AG04450 (cell line): ENCODE measurements at regions of chr5 and their contacts with region 1.

Region 1: GRCh38 chr5:150789943-150790611 is 11.5 kb downstream of the SMIM3 start:
- DNase-seq: peak; percentile 95
- H3K4me3 ChIP-seq: peak overlapping the region; percentile 4
- H3K27ac ChIP-seq: peak overlapping the region; percentile 73
- H3K27me3 ChIP-seq: no peaks in the 10 kb centered on the region
- CTCF ChIP-seq: no peak

Region 2: DNA sequence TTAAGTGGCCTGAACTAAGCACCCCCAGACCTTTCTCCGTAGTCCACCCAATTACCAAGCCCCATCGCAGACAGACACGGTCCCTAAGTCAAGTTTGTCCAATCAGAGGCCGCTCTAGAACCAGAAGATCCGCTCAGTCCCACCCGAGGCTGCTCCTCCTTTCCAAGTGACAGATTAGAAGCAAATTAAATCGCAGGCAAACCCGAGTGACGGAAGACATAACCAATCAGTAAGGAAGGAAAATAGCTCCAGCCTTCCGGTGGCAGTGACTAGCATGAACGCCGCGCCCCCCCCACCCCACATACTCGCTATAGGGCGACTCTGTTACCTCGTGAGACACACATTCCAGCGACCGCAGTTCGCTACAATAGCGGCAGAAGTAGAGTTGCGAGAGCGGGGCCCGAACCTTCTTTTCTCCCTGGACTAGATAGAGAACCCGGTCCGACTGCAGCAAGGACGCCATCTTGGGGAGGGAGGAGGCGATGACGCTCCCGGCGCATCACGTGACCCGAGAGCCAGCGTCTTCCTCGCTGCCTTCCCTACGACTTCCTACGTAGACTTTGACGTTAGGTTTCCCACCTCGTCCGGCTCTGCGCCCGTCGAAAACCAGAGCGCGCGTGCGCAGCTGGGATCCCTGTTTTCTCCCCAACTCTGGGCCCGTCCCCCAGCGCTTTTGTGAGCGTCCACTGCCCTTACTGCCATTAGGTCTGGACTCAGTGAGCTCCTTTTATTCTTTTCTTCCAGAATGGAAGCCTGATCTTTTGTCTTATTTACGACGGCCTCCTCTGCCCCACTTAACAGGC is 31.3 kb before region 1 on chr5 and contains the start of gene DCTN4:
- CTCF ChIA-PET with region 1: interaction called, 3 read pairs
- POLR2A ChIA-PET with region 1: interaction called, 10 read pairs
- DNase-seq: peak; percentile 98
- H3K4me3 ChIP-seq: peak within 1 kb of the TSS; percentile 88
- H3K27ac ChIP-seq: peak within 1 kb of the TSS; percentile 97
- H3K27me3 ChIP-seq: no peaks in the 10 kb centered on the region
- CTCF ChIP-seq: no peak
- polyA plus RNA-seq, gene DCTN4: 54.6 and 61.1 TPM in 2 replicates

Region 3: GRCh38 chr5:150778517-150779396 is 11.3 kb before region 1 on chr5 and contains the start of gene SMIM3:
- CTCF ChIA-PET with region 1: interaction called, 8 read pairs
- POLR2A ChIA-PET with region 1: interaction called, 23 read pairs
- DNase-seq: no peak
- H3K4me3 ChIP-seq: peak within 1 kb of the TSS; percentile 92
- H3K27ac ChIP-seq: peak within 1 kb of the TSS; percentile 78
- H3K27me3 ChIP-seq: no peaks in the 10 kb centered on the region
- CTCF ChIP-seq: peak; percentile 50
- polyA plus RNA-seq, gene SMIM3: 34.3 and 36.3 TPM in 2 replicates

Region 4: GRCh38 chr5:150801117-150801927 is 11.2 kb after region 1 on chr5:
- CTCF ChIA-PET with region 1: interaction called, 30 read pairs
- POLR2A ChIA-PET with region 1: interaction called, 3 read pairs
- DNase-seq: no peak
- H3K4me3 ChIP-seq: peak overlapping the region; percentile 40
- H3K27ac ChIP-seq: no peak overlapping the region
- H3K27me3 ChIP-seq: no peaks in the 10 kb centered on the region
- CTCF ChIP-seq: peak; percentile 64